ENCODE measurements at regions of chr1 and their contacts with region 1.

Region 1: DNA sequence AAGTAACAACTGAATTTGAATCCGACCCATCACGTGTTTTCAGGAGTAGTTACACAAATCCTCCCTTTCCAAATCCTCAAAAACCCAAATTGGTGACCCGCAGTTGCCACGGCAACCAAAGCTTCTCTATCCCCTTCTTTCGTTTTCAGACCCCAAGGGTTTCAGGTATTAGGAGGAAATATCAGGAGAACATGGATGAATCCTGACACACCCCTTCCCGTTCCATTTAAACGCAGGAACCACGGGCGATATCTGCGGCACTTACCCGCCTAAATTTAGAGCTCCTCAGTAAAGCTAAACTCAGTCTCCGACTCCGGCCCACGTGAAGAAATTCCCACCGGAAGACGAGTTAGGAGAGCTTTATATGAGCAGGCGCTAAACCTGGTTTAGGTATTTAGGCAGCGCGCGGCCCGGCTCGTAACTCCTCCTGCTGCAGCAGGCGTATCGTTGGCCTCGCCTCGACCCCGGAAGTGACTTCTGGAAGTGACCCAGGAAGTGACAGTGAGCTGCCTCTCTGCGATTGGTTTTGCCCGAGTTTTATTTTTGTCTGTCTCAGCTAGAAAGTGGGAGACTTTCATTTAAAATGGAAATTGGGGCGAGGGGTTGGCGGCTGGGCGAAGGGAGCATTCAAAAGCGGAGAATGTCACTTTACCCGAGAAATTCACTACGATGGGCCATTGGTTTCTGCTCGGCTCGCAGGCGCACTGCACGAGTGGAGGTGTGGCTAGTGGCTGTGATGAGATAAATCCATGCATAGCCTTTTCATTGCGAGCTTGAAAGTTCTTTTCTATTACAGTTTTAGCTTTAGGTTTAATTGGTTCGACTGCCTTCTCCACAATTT is at the start of gene TAF1A:
- DNase-seq: peak; percentile 53 to 92 (median 87)
- ATAC-seq: peak; percentile 100
- H3K4me3 ChIP-seq: peak within 1 kb of the TSS; percentile 93
- H3K4me3 Mint-ChIP-seq: peak within 1 kb of the TSS; percentile 86 to 99 (median 96)
- H3K27ac ChIP-seq: peak within 1 kb of the TSS; percentile 85
- H3K27ac Mint-ChIP-seq: peak within 1 kb of the TSS; percentile 94 to 99 (median 97)
- H3K4me1 ChIP-seq: peaks cover 6 to 18% of the 10 kb centered on the region in 2 donors
- H3K4me1 Mint-ChIP-seq: peaks cover 21 to 68% (median 57%) of the 10 kb centered on the region in 7 donors
- H3K27me3 ChIP-seq: no peaks in the 10 kb centered on the region
- H3K27me3 Mint-ChIP-seq: peaks cover 0 to 4% (median 0%) of the 10 kb centered on the region in 5 donors
- total RNA-seq, gene TAF1A: 6.5 to 17.9 (median 9.3) TPM

Region 2: DNA sequence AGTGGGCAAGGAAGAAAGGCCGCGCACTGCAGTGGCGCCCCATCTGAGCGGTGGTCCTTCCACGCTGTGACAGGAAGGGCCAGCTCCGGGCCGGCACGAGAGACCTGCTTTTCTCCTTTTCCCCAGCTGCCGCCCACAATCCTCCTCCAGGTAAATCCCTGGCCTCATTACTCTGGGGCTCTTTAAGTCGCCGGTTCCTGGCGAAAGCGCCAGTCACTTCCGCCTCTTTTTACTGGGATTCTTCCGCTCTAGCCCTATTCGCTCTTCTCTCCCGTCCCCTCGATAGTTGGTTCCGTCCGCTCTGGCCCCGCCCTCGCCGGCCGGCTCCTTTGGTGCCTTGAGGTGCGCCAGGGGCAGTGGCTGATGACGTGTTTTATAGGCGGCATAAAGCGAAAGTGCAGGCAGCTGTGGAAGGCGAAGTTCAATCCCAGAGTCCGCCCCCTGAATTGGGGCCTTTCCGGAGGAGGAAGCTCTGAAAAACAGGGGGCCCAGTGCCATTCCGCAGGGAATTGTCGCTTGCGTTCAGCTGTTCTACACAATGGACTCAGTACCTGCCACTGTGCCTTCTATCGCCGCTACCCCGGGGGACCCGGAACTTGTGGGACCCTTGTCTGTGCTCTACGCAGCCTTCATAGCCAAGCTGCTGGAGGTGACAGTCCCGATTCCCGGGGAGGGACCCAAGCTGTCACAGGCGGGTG is 54.4 kb after region 1 on chr1:
- CTCF ChIA-PET with region 1: no interaction called
- POLR2A ChIA-PET with region 1: interaction called, 18 read pairs
- intact Hi-C with region 1: loop called (anchors 1 kb)
- DNase-seq: peak; percentile 93 to 98 (median 96)
- ATAC-seq: peak; percentile 97
- H3K4me3 ChIP-seq: peak overlapping the region; percentile 99
- H3K4me3 Mint-ChIP-seq: peak overlapping the region; percentile 87 to 99 (median 97)
- H3K27ac ChIP-seq: peak overlapping the region; percentile 92
- H3K27ac Mint-ChIP-seq: peak overlapping the region; percentile 95 to 99 (median 98)
- H3K4me1 ChIP-seq: peaks cover 12% of the 10 kb centered on the region in 2 donors
- H3K4me1 Mint-ChIP-seq: peaks cover 12 to 59% (median 49%) of the 10 kb centered on the region in 7 donors
- H3K27me3 ChIP-seq: no peaks in the 10 kb centered on the region
- H3K27me3 Mint-ChIP-seq: no peaks in the 10 kb centered on the region

Region 3: GRCh38 chr1:223374064-223374610 is 784.5 kb after region 1 on chr1:
- CTCF ChIA-PET with region 1: no interaction called
- POLR2A ChIA-PET with region 1: no interaction called
- intact Hi-C with region 1: no loop called
- DNase-seq: no peak
- ATAC-seq: no peak
- H3K4me3 ChIP-seq: no peak overlapping the region
- H3K4me3 Mint-ChIP-seq: no peak overlapping the region
- H3K27ac ChIP-seq: no peak overlapping the region
- H3K27ac Mint-ChIP-seq: no peak overlapping the region
- H3K4me1 ChIP-seq: no peaks in the 10 kb centered on the region
- H3K4me1 Mint-ChIP-seq: peaks cover 0 to 4% (median 0%) of the 10 kb centered on the region in 7 donors
- H3K27me3 ChIP-seq: no peaks in the 10 kb centered on the region
- H3K27me3 Mint-ChIP-seq: peaks cover 4 to 18% (median 6%) of the 10 kb centered on the region in 5 donors

Measured in naive thymus-derived CD4-positive, alpha-beta T cell (primary cell).